ENCODE measurements at regions of chr13 and their contacts with region 1.

Region 1: DNA sequence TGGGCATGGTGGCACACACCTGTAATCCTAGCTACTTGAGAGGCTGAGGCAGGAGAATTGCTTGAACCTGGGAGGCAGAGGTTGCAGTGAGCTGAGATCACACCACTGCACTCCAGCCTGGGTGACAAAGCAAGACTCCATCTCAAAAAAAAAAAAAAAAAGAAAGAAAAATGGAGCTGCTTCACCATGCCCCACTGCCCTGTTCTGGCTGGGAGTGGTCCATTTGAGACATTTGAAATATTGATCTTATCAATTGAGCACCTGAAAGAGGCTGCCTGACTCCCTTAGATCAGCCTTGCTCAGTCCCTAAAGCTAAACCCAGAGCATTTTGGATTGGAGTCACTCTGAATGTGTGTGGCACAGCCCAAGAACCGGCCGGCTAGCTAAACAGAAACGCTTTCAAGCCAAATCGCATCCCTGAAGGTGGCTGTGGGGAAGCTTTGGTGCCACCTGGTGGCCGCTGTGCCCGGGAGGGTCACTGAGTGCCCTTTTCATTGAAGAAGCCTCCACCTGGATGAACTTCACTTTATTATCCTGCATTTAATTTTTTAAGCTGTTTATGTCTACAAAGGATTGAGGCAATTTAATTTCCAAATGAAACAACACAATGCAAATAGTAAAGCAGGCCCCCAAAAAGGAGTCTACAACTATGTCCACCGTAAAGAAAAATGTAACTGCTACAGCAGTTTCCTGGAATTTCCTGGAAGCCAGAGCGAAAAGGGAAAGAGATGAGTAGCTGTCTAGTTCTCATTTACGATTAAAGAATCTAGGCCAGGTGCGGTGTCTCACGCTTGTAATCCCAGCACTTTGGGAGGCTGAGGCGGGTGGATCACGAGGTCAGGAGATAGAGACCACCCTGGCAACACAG is 53.1 kb upstream of the SERPINE3 start:
- DNase-seq: peak; percentile 73
- H3K4me3 ChIP-seq: no peak overlapping the region
- H3K27ac ChIP-seq: no peak overlapping the region
- H3K4me1 ChIP-seq: no peaks in the 10 kb centered on the region
- H3K27me3 ChIP-seq: peaks cover 0 to 3% of the 10 kb centered on the region in 2 experiments
- CTCF ChIP-seq: peak; percentile 87 to 92
- POLR2A ChIP-seq: no peak

Region 2: DNA sequence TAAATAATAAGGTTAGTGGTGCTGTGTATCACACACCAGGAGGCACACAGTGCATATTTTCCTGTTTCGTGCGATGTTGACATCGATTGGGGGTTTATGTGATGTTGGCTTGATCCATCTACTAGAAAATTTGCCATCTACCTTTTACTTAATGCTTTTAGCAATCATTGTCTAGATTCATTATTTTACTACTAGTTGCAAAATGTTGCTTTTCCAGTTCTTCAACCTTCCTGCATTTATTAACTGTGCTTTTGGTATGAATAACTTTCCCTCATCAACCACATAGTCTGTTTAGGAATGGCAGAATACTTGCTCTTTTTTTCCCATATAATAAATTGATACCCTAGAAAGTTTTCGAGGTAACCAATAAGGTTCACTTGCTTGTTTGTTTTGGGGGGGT is 192.8 kb before region 1 on chr13:
- CTCF ChIA-PET with region 1: no interaction called
- POLR2A ChIA-PET with region 1: no interaction called
- dilution Hi-C with region 1: no loop called
- intact Hi-C with region 1: no loop called
- DNase-seq: no peak
- H3K4me3 ChIP-seq: no peak overlapping the region
- H3K27ac ChIP-seq: no peak overlapping the region
- H3K4me1 ChIP-seq: no peaks in the 10 kb centered on the region
- H3K27me3 ChIP-seq: peaks cover 9 to 11% of the 10 kb centered on the region in 2 experiments
- CTCF ChIP-seq: no peak
- POLR2A ChIP-seq: no peak

Region 3: DNA sequence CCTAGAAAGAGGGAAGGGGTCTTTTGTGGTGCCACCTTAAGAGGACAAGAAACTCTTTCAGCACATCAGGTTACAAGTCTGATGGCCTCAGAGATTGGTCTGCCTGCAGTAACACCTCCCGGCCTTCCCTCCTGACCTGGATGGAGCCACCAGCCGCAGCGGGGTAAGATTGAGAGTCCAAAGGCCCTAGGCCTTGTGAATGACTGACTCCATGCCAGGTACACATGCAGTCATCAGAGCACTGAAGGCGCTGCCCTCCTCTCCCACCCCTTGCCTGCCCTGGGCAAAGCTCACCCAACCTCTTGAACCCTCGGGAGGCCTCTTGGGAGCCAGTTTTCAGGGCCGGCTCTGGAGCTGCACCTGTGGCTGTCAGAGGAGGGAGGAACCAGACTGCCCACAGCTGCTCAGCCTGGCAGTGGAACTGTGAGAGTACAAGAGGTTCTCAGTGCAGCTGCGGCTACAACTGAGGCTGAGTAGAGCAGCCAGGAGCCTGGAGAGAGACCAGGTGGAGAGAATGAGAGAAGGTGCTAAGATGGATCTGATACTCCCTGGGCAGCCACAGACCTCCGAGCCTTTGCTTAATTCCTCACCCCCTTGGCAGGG is 151.5 kb before region 1 on chr13:
- CTCF ChIA-PET with region 1: interaction called, 432 read pairs
- POLR2A ChIA-PET with region 1: no interaction called
- dilution Hi-C with region 1: no loop called
- intact Hi-C with region 1: no loop called
- DNase-seq: no peak
- H3K4me3 ChIP-seq: no peak overlapping the region
- H3K27ac ChIP-seq: no peak overlapping the region
- H3K4me1 ChIP-seq: peaks cover 2% of the 10 kb centered on the region
- H3K27me3 ChIP-seq: peaks cover 0 to 1% of the 10 kb centered on the region in 2 experiments
- CTCF ChIP-seq: no peak
- POLR2A ChIP-seq: no peak

Region 4: DNA sequence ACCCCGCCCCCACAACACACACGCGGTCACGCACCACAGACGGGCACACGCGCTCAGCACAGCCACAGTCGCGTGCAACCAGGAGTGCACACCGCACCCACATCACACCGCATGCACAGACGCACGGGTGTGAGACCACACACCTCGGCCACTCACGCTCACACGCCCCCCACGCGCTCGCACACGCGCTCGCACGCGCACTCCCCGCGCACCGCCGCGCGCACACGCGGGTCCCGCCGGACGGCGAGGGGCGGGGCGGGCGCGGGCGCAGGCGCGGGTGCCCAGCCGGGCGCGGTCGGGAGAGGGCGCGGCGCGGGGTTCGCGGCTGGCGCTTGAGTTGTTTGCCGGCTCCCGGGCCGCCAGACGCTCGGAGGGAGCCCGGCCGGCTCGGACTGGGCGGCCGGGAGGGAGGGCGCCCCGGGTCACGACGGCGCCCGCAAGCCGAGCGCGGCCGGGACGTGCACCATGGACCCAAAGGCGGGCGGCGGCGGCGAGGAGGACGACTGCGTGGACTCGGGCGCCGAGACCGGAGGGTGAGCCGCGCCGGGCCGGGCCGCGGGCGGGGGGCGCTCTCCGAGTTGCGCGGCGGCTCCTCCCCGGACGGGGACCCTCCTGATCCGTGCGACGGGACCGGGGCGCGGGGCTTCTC is 64.2 kb before region 1 on chr13 and contains the start of gene FAM124A:
- CTCF ChIA-PET with region 1: interaction called, 57 read pairs
- POLR2A ChIA-PET with region 1: no interaction called
- dilution Hi-C with region 1: no loop called
- intact Hi-C with region 1: loop called (anchors 1 kb)
- DNase-seq: peak; percentile 36
- H3K4me3 ChIP-seq: peak within 1 kb of the TSS; percentile 29 to 64 (median 46)
- H3K27ac ChIP-seq: no peak within 1 kb of the TSS
- H3K4me1 ChIP-seq: peaks cover 7% of the 10 kb centered on the region
- H3K27me3 ChIP-seq: no peaks in the 10 kb centered on the region
- CTCF ChIP-seq: peak in 1 of 2 donors; percentile 37
- POLR2A ChIP-seq: peak; percentile 32
- total RNA-seq, gene FAM124A: 7.4 and 9.9 TPM in 2 replicates

Region 5: GRCh38 chr13:51252954-51253532 is 33.3 kb before region 1 on chr13:
- CTCF ChIA-PET with region 1: interaction called, 12 read pairs
- POLR2A ChIA-PET with region 1: no interaction called
- dilution Hi-C with region 1: no loop called
- intact Hi-C with region 1: no loop called
- DNase-seq: no peak
- H3K4me3 ChIP-seq: no peak overlapping the region
- H3K27ac ChIP-seq: no peak overlapping the region
- H3K4me1 ChIP-seq: no peaks in the 10 kb centered on the region
- H3K27me3 ChIP-seq: no peaks in the 10 kb centered on the region
- CTCF ChIP-seq: no peak
- POLR2A ChIP-seq: no peak

Region 6: GRCh38 chr13:51275101-51275500 is 11.3 kb before region 1 on chr13:
- CTCF ChIA-PET with region 1: interaction called, 14 read pairs
- POLR2A ChIA-PET with region 1: no interaction called
- dilution Hi-C with region 1: no loop called
- intact Hi-C with region 1: no loop called
- DNase-seq: no peak
- H3K4me3 ChIP-seq: no peak overlapping the region
- H3K27ac ChIP-seq: no peak overlapping the region
- H3K4me1 ChIP-seq: peaks cover 10% of the 10 kb centered on the region
- H3K27me3 ChIP-seq: no peaks in the 10 kb centered on the region
- CTCF ChIP-seq: no peak
- POLR2A ChIP-seq: no peak

Region 7: DNA sequence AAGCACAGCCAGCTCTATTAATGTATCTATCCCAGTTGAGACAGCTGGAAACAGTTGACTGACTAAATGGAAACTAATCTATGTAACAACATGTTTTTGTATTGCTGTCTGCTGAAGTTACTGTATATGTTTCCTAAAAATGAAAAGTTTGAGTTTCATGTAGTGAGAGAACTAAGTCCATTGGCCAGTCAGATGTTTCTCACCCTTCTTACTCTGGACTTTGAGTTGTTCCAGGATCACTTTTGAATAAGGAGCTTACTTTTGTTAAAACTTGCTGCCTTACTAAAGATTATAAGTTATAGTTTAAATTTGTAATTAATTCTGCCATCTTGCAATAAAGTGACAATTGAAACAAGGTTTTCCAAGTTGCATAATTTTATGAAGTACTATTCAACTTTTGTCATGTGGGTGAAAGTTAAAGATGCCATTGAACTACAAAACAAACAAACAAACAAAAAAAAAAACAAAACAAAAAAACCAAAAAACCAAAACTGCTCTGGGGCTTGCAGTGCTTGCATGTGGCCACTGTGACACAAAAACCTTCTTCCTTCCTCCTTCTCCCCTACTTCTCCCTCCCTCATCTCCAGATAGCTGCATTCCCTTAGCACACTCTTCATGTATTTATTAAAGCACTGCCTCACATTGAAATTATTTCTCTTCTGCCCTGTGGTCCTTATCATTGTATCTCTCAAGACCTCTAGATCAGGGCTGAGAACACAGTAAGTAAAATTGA is 313.2 kb after region 1 on chr13:
- CTCF ChIA-PET with region 1: no interaction called
- POLR2A ChIA-PET with region 1: no interaction called
- dilution Hi-C with region 1: no loop called
- intact Hi-C with region 1: no loop called
- DNase-seq: no peak
- H3K4me3 ChIP-seq: no peak overlapping the region
- H3K27ac ChIP-seq: no peak overlapping the region
- H3K4me1 ChIP-seq: no peaks in the 10 kb centered on the region
- H3K27me3 ChIP-seq: no peaks in the 10 kb centered on the region
- CTCF ChIP-seq: no peak
- POLR2A ChIP-seq: no peak

Measured in endothelial cell of umbilical vein (primary cell).